GM10248 (cell line): ENCODE measurements at regions of chr3 and their contacts with region 1.

Region 1: GRCh38 chr3:171172070-171172469 is 145.6 kb upstream of the SLC2A2 start:
- DNase-seq: no peak
- CTCF ChIP-seq: peak; percentile 25

Region 2: DNA sequence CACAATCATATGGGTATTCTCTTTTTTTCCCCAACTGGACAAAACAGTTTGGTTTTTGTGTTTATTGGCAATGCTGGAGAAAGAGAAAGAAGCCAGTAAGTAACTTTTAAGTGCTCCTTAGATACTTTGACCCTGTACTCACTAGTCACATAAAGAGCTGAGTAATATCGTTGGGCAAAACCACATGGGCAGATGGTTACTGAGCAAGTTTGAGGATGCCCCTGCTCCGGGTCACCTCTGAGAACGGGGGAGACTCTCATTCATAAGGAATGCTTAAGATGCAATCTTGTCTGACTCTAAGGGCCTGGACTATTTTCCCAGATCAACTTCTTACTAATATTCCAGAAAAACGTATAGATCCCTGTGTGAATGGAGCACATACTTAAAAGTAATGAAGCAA is 39.2 kb before region 1 on chr3:
- CTCF ChIA-PET with region 1: no interaction called
- POLR2A ChIA-PET with region 1: no interaction called
- DNase-seq: no peak
- CTCF ChIP-seq: no peak

Region 3: GRCh38 chr3:171187706-171188290 is 15.7 kb after region 1 on chr3:
- CTCF ChIA-PET with region 1: interaction called, 15 read pairs
- POLR2A ChIA-PET with region 1: interaction called, 4 read pairs
- DNase-seq: peak; percentile 26
- CTCF ChIP-seq: peak; percentile 69